ENCODE measurements at regions of chr9 and their contacts with region 1.

Region 1: GRCh38 chr9:27726244-27727081 is 153.2 kb upstream of the C9orf72 start:
- DNase-seq: peak; percentile 10 to 68
- ATAC-seq: peak; percentile 75 to 87; a peak in 5 of 6 replicates
- H3K4me3 ChIP-seq: no peak overlapping the region
- H3K27ac ChIP-seq: no peak overlapping the region
- H3K4me1 ChIP-seq: no peaks in the 10 kb centered on the region
- CTCF ChIP-seq: peak; percentile 66
- EP300 ChIP-seq: no peak
- POLR2A ChIP-seq: no peak
- RAD21 ChIP-seq: peak; percentile 84 to 93

Region 2: DNA sequence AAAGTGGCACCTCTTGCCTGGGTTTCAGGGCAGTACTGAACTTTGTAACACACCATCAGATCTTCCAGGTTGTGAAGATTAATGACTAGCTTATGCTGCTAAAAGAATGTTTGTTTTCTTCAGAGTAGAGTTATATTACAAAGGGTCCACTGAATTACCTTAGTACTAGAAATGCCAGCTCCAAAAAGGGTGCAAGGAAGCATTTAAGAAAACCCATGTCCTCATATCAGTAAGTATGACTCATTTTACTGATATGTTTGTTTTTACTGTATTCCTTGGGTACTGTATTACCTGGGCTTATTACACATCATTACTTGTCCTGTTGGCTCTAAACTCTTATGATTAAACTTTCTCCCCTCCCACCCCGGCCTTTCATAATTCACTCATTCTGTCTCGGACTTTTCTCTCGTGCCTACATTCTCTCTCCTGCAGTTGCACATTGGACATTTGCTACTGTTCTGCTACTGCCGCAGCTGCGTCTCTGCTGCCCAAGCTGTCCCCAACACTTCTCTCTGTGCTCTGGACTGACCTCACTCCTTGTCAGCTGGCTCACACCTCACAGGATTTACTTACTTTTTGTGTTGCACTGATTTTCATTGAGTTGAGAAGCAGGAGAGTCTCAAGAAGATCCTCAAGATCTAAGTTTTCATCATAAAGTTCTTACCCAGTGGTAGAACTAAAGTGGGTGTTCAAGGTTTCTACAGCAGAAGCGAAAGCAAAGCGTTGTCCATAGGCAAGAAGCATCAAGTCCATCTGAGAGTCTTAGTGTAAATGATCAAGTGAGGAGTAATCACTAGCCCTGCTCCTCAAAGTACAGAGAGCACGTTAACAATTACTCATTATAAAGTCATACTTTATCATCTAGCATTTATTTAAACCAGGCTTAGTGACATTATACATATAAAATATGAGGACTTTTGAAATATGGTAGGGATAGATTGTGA is 99.9 kb before region 1 on chr9:
- CTCF ChIA-PET with region 1: no interaction called
- POLR2A ChIA-PET with region 1: no interaction called
- DNase-seq: no peak
- ATAC-seq: peak; percentile 43 to 55; a peak in 4 of 6 replicates
- H3K4me3 ChIP-seq: no peak overlapping the region
- H3K27ac ChIP-seq: no peak overlapping the region
- H3K4me1 ChIP-seq: peaks cover 11% of the 10 kb centered on the region; the same call in 2 of the 3 replicates
- CTCF ChIP-seq: no peak
- EP300 ChIP-seq: no peak
- POLR2A ChIP-seq: no peak
- RAD21 ChIP-seq: no peak

Region 3: DNA sequence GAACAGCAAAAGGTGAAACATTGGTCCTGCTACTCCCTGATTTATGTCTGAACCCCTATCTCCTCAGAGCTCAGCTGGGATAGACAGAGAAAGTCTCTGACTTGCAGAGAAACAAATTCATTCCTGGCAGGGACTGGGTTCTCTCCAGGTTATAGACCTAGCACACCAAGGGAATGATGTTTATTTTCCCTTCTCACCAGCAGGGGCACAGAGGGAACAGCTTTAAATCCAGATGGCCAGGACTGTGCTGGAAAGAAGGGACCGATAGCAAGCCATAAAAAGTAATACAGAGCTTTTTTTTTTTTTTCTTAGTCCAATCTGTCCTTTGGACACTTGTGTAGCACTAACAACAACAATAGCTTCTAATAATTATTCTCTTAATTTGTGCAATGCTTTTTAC is 12.1 kb before region 1 on chr9:
- CTCF ChIA-PET with region 1: interaction called, 29 read pairs
- POLR2A ChIA-PET with region 1: no interaction called
- DNase-seq: peak; percentile 3 to 4
- ATAC-seq: peak in 1 of 2 experiments; percentile 73; a peak in 3 of 6 replicates
- H3K4me3 ChIP-seq: no peak overlapping the region
- H3K27ac ChIP-seq: no peak overlapping the region
- H3K4me1 ChIP-seq: no peaks in the 10 kb centered on the region
- CTCF ChIP-seq: no peak
- EP300 ChIP-seq: no peak
- POLR2A ChIP-seq: no peak
- RAD21 ChIP-seq: no peak

Region 4: GRCh38 chr9:27743490-27743889 is 17.0 kb after region 1 on chr9:
- CTCF ChIA-PET with region 1: interaction called, 11 read pairs
- POLR2A ChIA-PET with region 1: no interaction called
- DNase-seq: no peak
- ATAC-seq: no peak
- H3K4me3 ChIP-seq: no peak overlapping the region
- H3K27ac ChIP-seq: no peak overlapping the region
- H3K4me1 ChIP-seq: no peaks in the 10 kb centered on the region
- CTCF ChIP-seq: no peak
- EP300 ChIP-seq: no peak
- POLR2A ChIP-seq: no peak
- RAD21 ChIP-seq: no peak

Region 5: DNA sequence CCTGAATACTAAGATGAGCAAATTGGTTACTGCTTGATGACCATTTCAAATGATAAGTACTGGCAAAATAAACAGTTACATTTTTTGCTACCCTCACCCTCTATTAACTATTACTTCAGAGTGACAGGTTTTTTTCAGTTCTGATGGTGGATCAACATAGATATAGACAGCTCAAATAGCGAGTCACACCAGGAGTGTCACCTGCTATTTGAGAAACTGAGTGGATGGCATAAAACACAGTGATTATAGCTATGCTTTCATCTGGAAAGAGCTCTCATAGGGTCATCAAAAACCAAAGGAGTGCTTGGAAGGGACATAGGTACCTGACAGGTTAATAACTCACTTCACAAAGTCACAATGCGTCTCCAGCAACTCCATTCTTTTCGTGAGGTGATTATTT is 91.3 kb after region 1 on chr9:
- CTCF ChIA-PET with region 1: no interaction called
- POLR2A ChIA-PET with region 1: no interaction called
- DNase-seq: no peak
- ATAC-seq: no peak
- H3K4me3 ChIP-seq: no peak overlapping the region
- H3K27ac ChIP-seq: no peak overlapping the region
- H3K4me1 ChIP-seq: no peaks in the 10 kb centered on the region
- CTCF ChIP-seq: no peak
- EP300 ChIP-seq: no peak
- POLR2A ChIP-seq: no peak
- RAD21 ChIP-seq: no peak

Region 6: DNA sequence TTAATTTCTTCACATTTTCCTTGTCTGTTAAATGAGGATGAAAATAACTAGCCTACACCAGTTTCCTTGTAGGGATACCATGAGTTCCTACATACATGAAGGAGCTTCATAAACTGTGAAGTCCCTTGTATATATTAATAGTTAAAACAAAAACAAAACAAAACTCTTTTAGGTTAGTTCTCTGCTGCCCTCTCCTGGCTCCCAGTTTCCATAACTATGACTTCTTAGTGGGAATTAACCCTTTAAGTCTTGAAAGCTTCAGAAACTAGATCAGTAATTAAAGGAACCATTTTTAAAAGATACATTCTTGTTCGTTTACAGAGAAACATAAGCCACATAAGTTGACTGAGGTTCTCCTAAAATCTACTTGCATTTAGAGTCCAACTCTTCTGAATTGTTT is 346.8 kb after region 1 on chr9:
- CTCF ChIA-PET with region 1: interaction called, 30 read pairs
- POLR2A ChIA-PET with region 1: no interaction called
- DNase-seq: peak; percentile 3 to 49
- ATAC-seq: 0 out of 6 replicates have a peak, but pooled peaks of 1 of the 2 experiments have one; percentile 41
- H3K4me3 ChIP-seq: no peak overlapping the region
- H3K27ac ChIP-seq: no peak overlapping the region
- H3K4me1 ChIP-seq: no peaks in the 10 kb centered on the region
- CTCF ChIP-seq: peak; percentile 48
- EP300 ChIP-seq: no peak
- POLR2A ChIP-seq: no peak
- RAD21 ChIP-seq: peak; percentile 54 to 57; a peak in 4 of 5 replicates

Measured in A549 (cell line).